ENCODE measurements at regions of chr4 and their contacts with region 1.

Region 1: DNA sequence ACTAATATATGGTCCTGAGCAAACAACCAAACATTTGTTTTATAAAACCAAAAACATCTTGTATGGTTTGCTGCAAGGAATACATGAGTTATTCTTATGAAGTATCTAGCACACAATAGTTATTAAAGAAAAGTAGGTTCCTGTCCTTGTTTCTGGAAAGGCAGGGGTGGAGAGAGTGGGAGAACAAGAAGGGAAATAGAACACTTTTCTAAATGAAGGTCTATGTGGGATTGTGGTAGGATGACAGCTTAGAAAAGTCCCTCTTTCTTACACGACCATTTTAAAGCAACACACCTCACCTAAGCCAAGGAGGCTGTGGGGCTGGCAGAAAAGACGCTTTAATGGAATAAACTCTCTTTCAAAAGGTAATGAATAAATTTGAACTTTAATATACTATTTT is 164.6 kb downstream of the ARAP2 start:
- DNase-seq: no peak
- ATAC-seq: no peak
- H3K4me3 Mint-ChIP-seq: no peak overlapping the region
- H3K27ac Mint-ChIP-seq: no peak overlapping the region
- H3K4me1 Mint-ChIP-seq: no peaks in the 10 kb centered on the region
- H3K27me3 Mint-ChIP-seq: no peaks in the 10 kb centered on the region
- CTCF ChIP-seq: no peak

Region 2: GRCh38 chr4:36024901-36025660 is 54.6 kb before region 1 on chr4:
- CTCF ChIA-PET with region 1: no interaction called
- POLR2A ChIA-PET with region 1: no interaction called
- intact Hi-C with region 1: no loop called
- DNase-seq: no peak
- ATAC-seq: no peak
- H3K4me3 Mint-ChIP-seq: no peak overlapping the region
- H3K27ac Mint-ChIP-seq: no peak overlapping the region
- H3K4me1 Mint-ChIP-seq: no peaks in the 10 kb centered on the region
- H3K27me3 Mint-ChIP-seq: no peaks in the 10 kb centered on the region
- CTCF ChIP-seq: no peak

Region 3: GRCh38 chr4:36054750-36055467 is 24.8 kb before region 1 on chr4:
- CTCF ChIA-PET with region 1: no interaction called
- POLR2A ChIA-PET with region 1: no interaction called
- intact Hi-C with region 1: loop called (anchors 2 kb)
- DNase-seq: no peak
- ATAC-seq: no peak
- H3K4me3 Mint-ChIP-seq: no peak overlapping the region
- H3K27ac Mint-ChIP-seq: no peak overlapping the region
- H3K4me1 Mint-ChIP-seq: no peaks in the 10 kb centered on the region
- H3K27me3 Mint-ChIP-seq: no peaks in the 10 kb centered on the region
- CTCF ChIP-seq: no peak

Measured in activated B cell treated with CpG ODN at 0.5 μM for 24 hours (primary cell).